ENCODE measurements at regions of chr1 and their contacts with region 1.

Region 1: DNA sequence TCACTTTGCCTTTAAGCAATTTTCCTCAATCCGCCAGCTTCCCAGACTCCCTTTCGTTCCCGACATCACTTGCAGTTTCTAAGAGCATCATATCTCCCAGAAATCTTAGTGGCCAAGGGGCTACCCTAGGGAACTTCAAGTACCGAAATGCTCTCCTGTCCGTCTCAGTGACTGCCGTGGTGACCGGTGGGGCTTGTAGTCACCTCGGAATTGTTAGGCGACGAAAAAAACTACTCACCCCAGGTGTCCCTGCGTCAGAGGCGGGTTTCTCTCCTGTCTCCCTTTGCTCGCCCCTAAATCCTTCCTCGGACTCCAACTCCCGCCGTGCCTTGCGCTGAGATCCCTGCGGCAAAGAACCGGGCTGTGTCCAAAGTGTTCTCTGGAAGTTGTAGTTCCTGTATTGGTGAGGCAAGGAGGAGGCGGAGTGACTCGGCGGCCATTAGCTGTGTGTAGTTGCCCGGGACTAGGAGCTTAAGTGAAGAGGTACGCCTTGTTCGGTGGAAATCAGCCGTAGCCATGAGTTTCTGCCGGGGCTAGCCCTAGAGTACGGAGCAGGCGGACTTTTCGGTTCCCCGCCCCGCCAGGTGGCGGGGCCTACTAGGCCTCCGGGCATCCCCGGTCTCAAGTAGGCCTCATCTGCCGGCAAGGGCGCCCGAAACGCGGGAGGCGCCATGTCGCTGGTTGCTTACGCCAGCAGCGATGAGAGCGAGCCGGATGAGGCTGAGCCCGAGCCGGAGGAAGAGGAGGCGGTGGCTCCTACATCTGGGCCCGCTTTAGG is at the start of gene PRCC:
- DNase-seq: peak; percentile 99
- H3K4me3 Mint-ChIP-seq: no peak within 1 kb of the TSS
- H3K27ac Mint-ChIP-seq: no peak within 1 kb of the TSS
- H3K4me1 Mint-ChIP-seq: peaks cover 39% of the 10 kb centered on the region
- H3K27me3 Mint-ChIP-seq: no peaks in the 10 kb centered on the region
- total RNA-seq, gene PRCC: 55.2 to 55.8 TPM

Region 2: DNA sequence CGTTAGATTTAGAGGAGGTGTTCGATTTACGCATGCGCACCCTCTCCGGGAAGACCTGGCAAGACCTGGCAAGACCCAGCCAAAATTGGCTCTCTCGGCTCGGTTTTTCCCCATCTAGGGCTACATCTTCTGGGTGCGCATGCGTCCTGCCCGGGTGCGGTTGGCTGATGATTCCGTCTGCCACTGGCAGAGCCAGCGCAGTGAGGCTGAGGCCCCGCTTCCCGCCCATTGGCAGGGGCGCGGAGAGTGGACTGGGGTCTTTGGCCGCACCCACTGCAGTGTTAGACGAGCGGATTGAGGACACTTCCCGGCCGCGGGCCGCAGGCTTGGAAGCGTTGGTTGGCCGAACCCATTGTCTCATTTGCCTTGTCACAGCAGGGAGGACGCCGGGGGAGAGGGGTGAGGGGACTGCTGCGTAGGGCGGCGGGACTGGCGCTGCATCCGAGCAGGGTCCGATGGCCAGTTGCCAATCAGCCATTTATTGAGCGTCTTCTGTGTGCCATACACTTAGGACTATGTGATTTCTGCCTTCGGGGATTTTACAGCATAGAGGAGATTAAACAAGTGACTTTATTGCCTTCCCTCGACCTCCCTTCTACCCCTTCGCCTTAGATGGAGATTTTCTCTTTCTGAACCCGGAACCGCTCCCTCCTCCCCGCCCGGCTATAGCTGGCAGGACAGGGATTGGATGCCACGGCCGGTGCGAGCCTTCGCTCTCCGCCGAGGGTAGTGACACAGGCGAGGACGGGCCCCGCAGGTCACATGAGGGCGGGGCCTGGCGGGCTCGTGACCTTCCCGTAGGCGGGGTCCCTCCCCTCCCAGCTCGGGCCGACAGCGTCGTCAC is 310.4 kb before region 1 on chr1:
- CTCF ChIA-PET with region 1: interaction called, 6 read pairs
- intact Hi-C with region 1: loop called (anchors 1 kb)
- DNase-seq: peak; percentile 100
- H3K4me3 Mint-ChIP-seq: peak overlapping the region; percentile 86
- H3K27ac Mint-ChIP-seq: peak overlapping the region; percentile 97
- H3K4me1 Mint-ChIP-seq: peaks cover 10% of the 10 kb centered on the region
- H3K27me3 Mint-ChIP-seq: no peaks in the 10 kb centered on the region

Region 3: DNA sequence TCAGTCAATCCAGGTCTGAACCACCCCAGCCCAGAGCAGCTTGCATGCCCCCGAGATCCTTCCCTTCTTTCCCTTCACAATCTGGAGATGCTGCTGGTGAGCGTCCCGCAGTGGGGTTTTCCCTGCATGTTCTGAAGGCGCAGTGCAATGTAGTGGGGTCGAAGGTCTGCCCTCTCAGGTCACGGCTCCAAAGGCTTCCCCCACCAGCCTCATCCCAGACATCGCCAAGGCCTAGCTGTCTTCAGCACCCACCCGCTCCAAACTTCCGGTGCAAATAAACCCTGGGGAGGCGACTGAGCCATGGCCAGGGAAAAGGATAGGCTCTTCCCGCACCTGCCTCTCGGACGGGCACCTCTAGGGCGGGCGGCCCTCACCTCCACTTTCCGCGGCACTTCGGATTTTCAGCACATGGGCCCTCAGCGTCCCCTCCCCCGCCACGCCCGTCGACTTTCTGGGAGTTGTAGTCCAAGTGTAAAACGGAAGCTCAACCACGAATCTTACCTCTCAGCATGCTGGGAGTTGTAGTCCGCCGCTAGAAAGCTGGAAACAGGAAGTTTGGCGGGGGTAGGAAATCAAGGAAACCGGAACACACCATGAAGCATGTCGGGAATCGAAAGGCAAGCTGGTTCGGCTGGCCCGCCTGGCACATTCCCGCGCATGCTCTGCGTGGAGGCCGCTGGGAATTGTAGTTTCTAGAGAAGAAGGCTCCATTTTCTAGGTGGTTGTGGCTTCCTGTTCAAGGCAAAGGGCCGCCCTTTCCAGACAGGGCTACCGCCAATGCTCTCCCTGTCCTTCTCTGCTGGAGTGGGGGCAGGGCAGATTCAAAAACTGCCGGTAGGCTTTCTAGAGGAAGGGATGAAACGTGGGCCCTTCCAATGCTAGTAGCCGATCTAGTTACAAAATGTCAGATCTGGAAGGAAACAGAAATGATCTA is 26.3 kb before region 1 on chr1 and contains the start of gene MRPL24:
- CTCF ChIA-PET with region 1: interaction called, 3 read pairs
- intact Hi-C with region 1: loop called (anchors 1 kb)
- DNase-seq: peak; percentile 99
- H3K4me3 Mint-ChIP-seq: peak within 1 kb of the TSS; percentile 98
- H3K27ac Mint-ChIP-seq: peak within 1 kb of the TSS; percentile 98
- H3K4me1 Mint-ChIP-seq: peaks cover 40% of the 10 kb centered on the region
- H3K27me3 Mint-ChIP-seq: no peaks in the 10 kb centered on the region
- total RNA-seq, gene MRPL24: 91.1 to 114 TPM

Region 4: DNA sequence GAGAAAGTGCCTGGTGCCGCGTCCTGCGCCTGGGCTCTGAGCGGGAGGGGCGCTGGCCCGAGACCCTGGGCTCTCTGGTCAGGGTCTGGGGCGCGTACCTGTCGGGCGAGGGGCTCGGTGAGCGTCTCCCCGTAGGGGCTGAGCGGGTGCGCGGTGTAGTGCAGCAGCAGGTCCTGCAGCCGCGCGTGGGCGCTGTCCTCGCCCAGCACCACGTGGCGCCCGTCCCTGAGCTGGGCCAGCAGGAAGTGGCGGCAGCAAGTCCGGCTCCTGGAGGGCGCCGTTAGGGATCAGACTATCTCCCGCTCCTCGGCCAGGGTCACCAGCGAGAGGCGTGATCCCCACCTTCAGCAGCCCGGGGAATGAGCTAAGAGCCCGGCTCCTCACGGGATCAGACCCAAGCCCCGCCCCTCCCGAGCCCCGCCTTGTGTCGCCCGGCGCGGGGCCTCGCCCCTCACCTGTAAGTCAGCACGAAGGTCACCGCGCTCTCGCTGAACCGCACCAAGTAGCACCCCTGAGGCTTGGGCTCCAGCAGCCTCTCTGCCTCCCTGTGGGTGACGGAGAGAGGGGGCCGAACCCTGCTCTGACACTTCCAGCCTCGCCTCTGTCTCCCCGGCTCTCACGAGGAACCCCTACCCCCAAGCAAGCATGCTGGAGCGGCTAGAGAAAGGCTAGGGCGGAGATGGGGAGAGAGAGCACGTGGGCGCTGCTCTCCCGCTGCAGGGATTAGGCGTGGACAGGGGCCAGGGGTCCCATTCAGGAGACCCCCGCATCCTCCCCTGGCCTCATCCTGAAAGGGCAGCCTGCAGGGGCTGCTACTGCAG is 46.7 kb after region 1 on chr1:
- CTCF ChIA-PET with region 1: interaction called, 5 read pairs
- intact Hi-C with region 1: loop called (anchors 1 kb)
- DNase-seq: peak; percentile 77
- H3K4me3 Mint-ChIP-seq: peak overlapping the region; percentile 93
- H3K27ac Mint-ChIP-seq: peak overlapping the region; percentile 100
- H3K4me1 Mint-ChIP-seq: peaks cover 62% of the 10 kb centered on the region
- H3K27me3 Mint-ChIP-seq: no peaks in the 10 kb centered on the region

Region 5: GRCh38 chr1:156896490-156897033 is 129.3 kb after region 1 on chr1:
- CTCF ChIA-PET with region 1: no interaction called
- intact Hi-C with region 1: no loop called
- DNase-seq: no peak
- H3K4me3 Mint-ChIP-seq: no peak overlapping the region
- H3K27ac Mint-ChIP-seq: no peak overlapping the region
- H3K4me1 Mint-ChIP-seq: peaks cover 18% of the 10 kb centered on the region
- H3K27me3 Mint-ChIP-seq: peaks cover 31% of the 10 kb centered on the region

Region 6: GRCh38 chr1:157138220-157139051 is 371.1 kb after region 1 on chr1 and contains the start of gene ETV3:
- CTCF ChIA-PET with region 1: no interaction called
- intact Hi-C with region 1: loop called (anchors 2 kb)
- DNase-seq: peak; percentile 95
- H3K4me3 Mint-ChIP-seq: peak within 1 kb of the TSS; percentile 96
- H3K27ac Mint-ChIP-seq: peak within 1 kb of the TSS; percentile 85
- H3K4me1 Mint-ChIP-seq: peaks cover 56% of the 10 kb centered on the region
- H3K27me3 Mint-ChIP-seq: no peaks in the 10 kb centered on the region
- total RNA-seq, gene ETV3: 23.2 to 23.3 TPM

Measured in activated naive CD4-positive, alpha-beta T cell treated with anti-CD3 and anti-CD28 coated beads for 36 hours (primary cell).